K562 (cell line): ENCODE measurements at regions of chr2 and their contacts with region 1.

Region 1: DNA sequence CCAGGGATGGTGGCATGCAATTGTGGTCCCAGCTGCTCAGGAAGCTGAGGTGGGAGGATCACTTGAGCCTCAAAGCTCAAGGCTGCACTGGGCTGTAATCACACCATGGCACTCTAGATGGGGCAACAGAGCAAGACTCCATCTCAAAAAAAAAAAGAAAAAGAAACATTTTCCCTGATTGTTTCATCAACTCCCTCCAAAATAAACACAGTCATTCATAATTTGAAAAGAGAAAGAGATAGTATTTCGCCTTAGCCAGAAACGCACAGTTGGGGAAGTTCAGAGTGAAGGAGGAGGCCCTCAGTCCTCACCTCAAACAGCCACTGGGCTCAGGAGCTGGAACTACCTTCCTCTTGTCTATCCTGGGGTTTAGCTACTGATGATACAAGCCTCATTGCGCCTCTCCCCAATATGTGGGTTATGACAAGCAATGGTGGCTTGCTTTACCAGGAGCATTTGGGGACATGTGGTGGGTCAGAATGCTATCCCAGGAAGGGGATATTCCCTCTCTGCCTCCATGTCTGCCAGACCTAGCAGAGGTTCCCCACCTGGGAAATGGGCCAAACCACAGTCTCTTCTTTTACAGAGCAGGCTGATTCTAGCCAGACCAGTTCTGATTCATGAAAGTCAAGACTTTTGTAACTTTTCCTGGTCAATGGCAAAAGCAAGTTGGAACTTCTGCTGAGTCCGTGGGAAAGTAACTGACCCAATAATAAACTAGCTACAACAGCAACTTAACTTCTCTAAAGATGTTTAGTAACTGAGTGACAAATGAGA is 22.2 kb upstream of the TMEM87B start:
- DNase-seq: no peak
- ATAC-seq: peak; percentile 77
- H3K4me3 ChIP-seq: no peak overlapping the region
- H3K27ac ChIP-seq: no peak overlapping the region
- H3K4me1 ChIP-seq: no peaks in the 10 kb centered on the region; a peak in 1 of 5 replicates
- H3K27me3 ChIP-seq: no peaks in the 10 kb centered on the region; a peak in 1 of 5 replicates
- CTCF ChIP-seq: no peak; a peak in 1 of 6 replicates
- EP300 ChIP-seq: no peak
- POLR2A ChIP-seq: no peak
- RAD21 ChIP-seq: no peak

Region 2: DNA sequence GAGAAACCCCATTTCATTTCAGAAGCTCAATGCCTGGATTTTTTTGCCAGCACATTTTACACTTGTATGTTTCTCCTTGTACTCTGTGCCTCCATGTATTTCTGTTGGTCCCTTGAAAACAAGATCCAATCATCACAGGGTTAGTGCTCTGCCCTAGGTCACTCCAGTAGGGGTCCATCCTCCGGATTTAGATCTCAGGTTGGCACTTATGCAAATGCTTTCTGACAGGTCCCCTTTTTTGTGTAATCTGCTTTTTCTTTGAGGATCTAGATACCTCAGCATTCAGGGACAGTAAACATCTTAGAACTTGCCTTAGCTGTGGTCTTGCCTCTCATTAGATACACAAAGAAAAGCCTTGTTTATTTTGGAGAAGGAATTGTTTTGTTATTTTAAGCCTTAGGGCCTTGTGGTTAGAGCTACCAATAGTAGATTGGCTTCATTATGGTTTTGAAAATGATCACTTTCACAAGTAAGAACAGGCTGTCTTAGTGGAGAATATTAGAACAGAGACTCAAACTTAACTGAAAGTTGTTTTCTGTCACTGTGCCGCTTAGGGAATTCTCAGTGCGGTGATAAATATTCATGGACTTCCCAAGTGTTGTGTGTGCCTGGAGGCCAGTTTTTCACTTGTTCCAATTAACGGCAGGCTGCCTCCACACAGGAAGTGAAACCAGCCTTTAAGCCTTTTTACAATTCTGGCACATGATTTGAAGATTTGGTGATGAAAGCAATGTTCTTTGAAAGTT is 126.7 kb before region 1 on chr2:
- CTCF ChIA-PET with region 1: no interaction called
- POLR2A ChIA-PET with region 1: no interaction called
- in situ Hi-C with region 1: loop called (anchors 5 kb)
- intact Hi-C with region 1: no loop called
- DNase-seq: peak in 1 of 4 experiments; percentile 2
- ATAC-seq: no peak
- H3K4me3 ChIP-seq: no peak overlapping the region
- H3K27ac ChIP-seq: no peak overlapping the region
- H3K4me1 ChIP-seq: peaks cover 6 to 26% of the 10 kb centered on the region in 2 experiments; a peak in 4 of 5 replicates
- H3K27me3 ChIP-seq: no peaks in the 10 kb centered on the region
- CTCF ChIP-seq: no peak
- EP300 ChIP-seq: no peak
- POLR2A ChIP-seq: no peak
- RAD21 ChIP-seq: no peak

Region 3: DNA sequence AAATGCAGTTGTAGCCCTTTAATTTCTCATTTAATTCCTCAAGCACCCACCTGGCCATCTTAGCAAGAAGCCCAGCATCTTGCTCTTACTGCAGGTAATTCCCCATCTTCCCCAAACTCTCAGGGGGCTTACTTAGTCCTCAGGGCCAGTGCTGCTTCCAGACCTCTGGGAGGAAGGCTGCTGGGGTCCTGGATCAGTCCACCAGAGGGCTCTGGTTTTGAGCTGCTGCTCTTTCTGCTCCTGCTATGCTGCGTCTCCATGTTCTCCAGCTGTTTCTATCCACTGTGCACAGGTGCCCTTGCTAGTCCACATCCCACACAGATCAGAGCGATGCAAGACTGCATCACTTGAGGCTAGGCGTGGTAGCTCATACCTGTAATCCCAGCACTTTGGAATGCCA is 12.3 kb before region 1 on chr2:
- CTCF ChIA-PET with region 1: no interaction called
- POLR2A ChIA-PET with region 1: no interaction called
- in situ Hi-C with region 1: no loop called
- intact Hi-C with region 1: no loop called
- DNase-seq: peak in 2 of 4 experiments; percentile 29 to 41
- ATAC-seq: peak; percentile 84
- H3K4me3 ChIP-seq: no peak overlapping the region
- H3K27ac ChIP-seq: no peak overlapping the region
- H3K4me1 ChIP-seq: peaks cover 13 to 23% of the 10 kb centered on the region in 2 experiments; a peak in 4 of 5 replicates
- H3K27me3 ChIP-seq: no peaks in the 10 kb centered on the region; a peak in 1 of 5 replicates
- CTCF ChIP-seq: peak; percentile 39 to 53 (median 43)
- EP300 ChIP-seq: no peak
- POLR2A ChIP-seq: no peak
- RAD21 ChIP-seq: peak in 1 of 2 experiments; percentile 42; a peak in 2 of 4 replicates

Region 4: GRCh38 chr2:112054847-112055729 is 22.2 kb after region 1 on chr2 and contains the start of gene TMEM87B:
- CTCF ChIA-PET with region 1: no interaction called
- POLR2A ChIA-PET with region 1: no interaction called
- in situ Hi-C with region 1: no loop called
- intact Hi-C with region 1: no loop called
- DNase-seq: peak; percentile 90 to 99 (median 92)
- ATAC-seq: peak; percentile 84
- H3K4me3 ChIP-seq: peak within 1 kb of the TSS; percentile 68
- H3K27ac ChIP-seq: peak within 1 kb of the TSS; percentile 91
- H3K4me1 ChIP-seq: peaks cover 14 to 26% of the 10 kb centered on the region in 2 experiments; a peak in 4 of 5 replicates
- H3K27me3 ChIP-seq: no peaks in the 10 kb centered on the region
- CTCF ChIP-seq: no peak
- EP300 ChIP-seq: peak; percentile 86
- POLR2A ChIP-seq: peak; percentile 79
- RAD21 ChIP-seq: peak in 1 of 2 experiments; percentile 25; a peak in 1 of 4 replicates
- polyA plus RNA-seq, gene TMEM87B: 3.7 to 5.8 TPM